KBM-7 (cell line): ENCODE measurements at regions of chr11 and their contacts with region 1.

Region 1: GRCh38 chr11:120108154-120108865 is 29.6 kb downstream of the TRIM29 start:
- DNase-seq: peak; percentile 66

Region 2: GRCh38 chr11:119481021-119481666 is 627.2 kb before region 1 on chr11:
- in situ Hi-C with region 1: loop called (anchors 25 kb)
- DNase-seq: peak; percentile 75

Region 3: GRCh38 chr11:120229451-120230424 is 121.4 kb after region 1 on chr11:
- in situ Hi-C with region 1: no loop called
- DNase-seq: peak; percentile 67